Breast epithelium (tissue), 4 donors: ENCODE measurements at regions of chr12 and their contacts with region 1.

Region 1: GRCh38 chr12:121334513-121335343 is 17.5 kb downstream of the ANAPC5 start:
- DNase-seq: no peak
- H3K4me3 ChIP-seq: no peak overlapping the region
- H3K27ac ChIP-seq: no peak overlapping the region
- H3K4me1 ChIP-seq: peaks cover 0 to 5% of the 10 kb centered on the region in 2 donors
- H3K27me3 ChIP-seq: no peaks in the 10 kb centered on the region
- CTCF ChIP-seq: peak; percentile 55 to 90 (median 82)
- POLR2A ChIP-seq: no peak

Region 2: GRCh38 chr12:121438905-121439304 is 104.2 kb after region 1 on chr12:
- intact Hi-C with region 1: loop called (anchors 10 kb)
- DNase-seq: no peak
- H3K4me3 ChIP-seq: no peak overlapping the region
- H3K27ac ChIP-seq: no peak overlapping the region
- H3K4me1 ChIP-seq: no peaks in the 10 kb centered on the region
- H3K27me3 ChIP-seq: no peaks in the 10 kb centered on the region
- CTCF ChIP-seq: no peak
- POLR2A ChIP-seq: no peak